Posterior vena cava (tissue), 2 donors: ENCODE measurements at regions of chr17 and their contacts with region 1.

Region 1: DNA sequence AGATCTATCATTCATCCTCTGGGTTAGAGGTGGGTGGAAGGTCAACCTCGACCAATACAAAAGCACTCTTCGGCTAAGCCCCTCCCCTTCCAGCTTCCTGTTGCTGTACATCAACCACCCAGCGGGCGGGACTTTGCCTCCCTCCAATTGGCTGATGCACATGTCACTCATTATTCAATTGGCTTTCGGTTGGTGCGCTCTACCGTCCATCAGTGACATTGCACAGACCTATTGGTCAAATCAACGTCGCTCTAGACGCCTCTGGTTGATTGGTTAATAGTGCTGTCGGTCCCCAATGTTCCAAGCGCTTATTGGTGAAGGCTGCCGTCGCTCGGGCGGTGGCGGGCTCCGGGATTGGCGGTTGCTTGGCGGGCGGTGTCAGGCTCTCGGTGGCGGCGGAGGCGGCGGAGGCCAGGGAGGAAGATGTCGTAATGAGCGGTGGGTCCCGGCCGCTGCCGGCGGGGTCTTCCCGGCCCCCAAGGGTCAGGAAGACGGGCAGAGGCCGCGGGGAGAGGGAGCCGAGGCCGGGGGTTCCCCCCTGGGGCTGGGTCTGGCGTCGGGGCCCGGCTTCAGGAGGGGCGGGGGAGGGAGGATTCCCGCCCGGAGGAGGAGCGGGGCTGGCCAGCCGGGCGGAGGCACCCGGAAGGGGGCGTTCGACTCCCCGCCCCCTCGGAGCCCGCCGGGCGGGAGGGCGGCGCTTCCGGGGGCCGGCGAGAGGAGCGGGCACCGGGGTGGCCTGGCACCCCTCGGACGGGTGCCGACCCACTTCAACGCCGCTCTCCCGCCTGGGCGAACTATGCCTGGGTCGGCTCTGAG is at the start of gene SP2:
- DNase-seq: peak; percentile 99
- total RNA-seq, gene SP2: 13.0 to 15.8 TPM

Region 2: DNA sequence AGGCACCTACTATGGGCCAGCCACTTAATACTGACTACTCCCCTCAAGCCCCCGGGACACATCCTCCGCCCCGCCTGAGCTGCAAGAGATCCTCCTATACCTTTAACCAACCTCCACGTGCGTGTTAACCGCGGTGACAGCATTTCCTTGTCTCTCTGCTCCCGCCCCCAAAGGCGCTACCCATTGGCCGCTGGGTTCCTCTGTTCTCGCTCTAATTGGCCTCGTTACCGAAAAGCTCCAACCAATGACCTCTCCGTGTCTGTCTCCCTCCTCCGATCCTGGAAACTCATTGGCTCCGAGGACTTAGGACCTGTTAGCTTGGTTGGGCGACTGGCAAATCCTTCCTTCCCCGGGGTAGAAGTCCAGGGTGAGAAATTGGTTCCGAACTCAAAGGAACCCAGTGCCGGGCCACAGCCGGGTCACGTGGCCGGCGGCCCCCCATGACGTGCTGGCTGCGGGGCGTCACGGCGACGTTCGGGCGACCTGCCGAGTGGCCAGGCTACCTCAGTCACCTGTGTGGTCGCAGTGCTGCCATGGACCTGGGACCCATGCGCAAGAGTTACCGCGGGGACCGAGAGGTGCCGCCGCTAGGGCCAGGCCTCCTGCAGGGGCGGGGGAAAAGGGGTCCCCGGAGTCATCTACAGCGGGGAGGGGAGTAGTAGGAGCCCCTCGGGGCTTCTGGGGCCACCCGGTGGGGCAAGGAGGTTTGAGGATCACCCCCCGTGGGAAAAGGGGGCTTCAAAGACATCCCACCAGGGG is 45.4 kb after region 1 on chr17 and contains the start of gene PNPO:
- intact Hi-C with region 1: loop called (anchors 5 kb)
- DNase-seq: peak; percentile 98
- total RNA-seq, gene PNPO: 14.5 to 18.8 TPM

Region 3: GRCh38 chr17:47949136-47949759 is 53.2 kb after region 1 on chr17:
- intact Hi-C with region 1: loop called (anchors 5 kb)
- DNase-seq: peak; percentile 97